ENCODE measurements at regions of chr6 and their contacts with region 1.

Region 1: GRCh38 chr6:169789982-169790927 is 38.8 kb downstream of the ERMARD start:
- DNase-seq: peak; percentile 41 to 78 (median 65)
- ATAC-seq: peak; percentile 96
- H3K4me3 ChIP-seq: peak overlapping the region; percentile 68
- H3K4me3 Mint-ChIP-seq: peak overlapping the region; percentile 81 to 91 (median 86)
- H3K27ac ChIP-seq: peak overlapping the region; percentile 12
- H3K27ac Mint-ChIP-seq: peak overlapping the region in 4 of 9 donors; percentile 15 to 29 (median 19)
- H3K4me1 ChIP-seq: peaks cover 0 to 6% of the 10 kb centered on the region in 2 donors
- H3K4me1 Mint-ChIP-seq: peaks cover 0 to 18% (median 15%) of the 10 kb centered on the region in 7 donors
- H3K27me3 ChIP-seq: no peaks in the 10 kb centered on the region
- H3K27me3 Mint-ChIP-seq: peaks cover 26 to 47% (median 38%) of the 10 kb centered on the region in 5 donors

Region 2: GRCh38 chr6:169751242-169752073 is 38.8 kb before region 1 on chr6 and contains the starts of genes DYNLT2 and ERMARD:
- CTCF ChIA-PET with region 1: no interaction called
- POLR2A ChIA-PET with region 1: no interaction called
- intact Hi-C with region 1: loop called in 1 of 2 experiments (anchors 1 kb)
- DNase-seq: peak; percentile 89 to 97 (median 94)
- ATAC-seq: peak; percentile 98
- H3K4me3 ChIP-seq: peak within 1 kb of the TSS; percentile 84
- H3K4me3 Mint-ChIP-seq: peak within 1 kb of the TSS; percentile 92 to 100 (median 98)
- H3K27ac ChIP-seq: peak within 1 kb of the TSS; percentile 92
- H3K27ac Mint-ChIP-seq: peak within 1 kb of the TSS; percentile 96 to 100 (median 100)
- H3K4me1 ChIP-seq: peaks cover 17% of the 10 kb centered on the region in 2 donors
- H3K4me1 Mint-ChIP-seq: peaks cover 21 to 43% (median 37%) of the 10 kb centered on the region in 7 donors
- H3K27me3 ChIP-seq: no peaks in the 10 kb centered on the region
- H3K27me3 Mint-ChIP-seq: peaks cover 0 to 4% (median 0%) of the 10 kb centered on the region in 5 donors
- total RNA-seq, gene DYNLT2: 2.5 to 4.7 (median 4.1) TPM
- total RNA-seq, gene ERMARD: 30.3 to 43.7 (median 35.7) TPM

Region 3: DNA sequence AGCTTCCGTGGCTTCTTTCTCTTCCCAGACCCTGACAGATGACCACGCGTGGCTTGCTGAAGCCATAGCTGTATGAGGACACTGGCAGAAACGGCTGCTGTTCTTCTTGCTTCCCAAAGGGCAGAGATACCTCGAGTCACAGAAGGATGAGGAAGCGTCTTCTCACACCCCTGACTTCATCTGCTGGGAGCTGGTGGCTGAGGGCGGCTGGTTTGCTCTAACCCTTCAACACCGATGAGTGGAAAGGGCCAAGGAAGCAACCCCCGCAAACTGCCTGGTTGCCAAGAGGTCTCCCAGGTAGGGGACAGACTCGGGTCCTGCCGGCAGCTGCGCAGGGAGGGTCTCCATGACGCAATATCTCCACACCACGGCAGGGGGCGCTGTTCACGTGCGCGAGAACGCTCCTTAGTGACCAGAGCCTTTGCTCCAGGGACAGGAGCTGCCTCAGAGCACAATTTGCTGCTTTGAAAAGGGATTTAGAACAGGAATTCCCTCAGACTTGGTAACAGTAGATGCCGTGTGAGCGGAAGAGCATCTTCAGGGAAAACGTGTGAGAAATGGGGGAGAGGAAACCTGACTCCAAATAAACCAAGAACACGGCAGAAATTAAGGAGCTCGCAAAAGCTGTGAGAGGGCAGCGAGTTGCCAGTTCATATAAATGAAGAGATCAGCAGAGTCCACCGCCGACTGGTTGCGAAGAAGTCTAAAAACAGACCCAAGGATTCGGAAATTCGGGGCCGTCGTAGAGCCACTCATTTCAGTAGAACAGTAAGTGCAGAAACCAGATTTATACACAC is 41.4 kb after region 1 on chr6:
- CTCF ChIA-PET with region 1: interaction called, 5 read pairs
- POLR2A ChIA-PET with region 1: no interaction called
- intact Hi-C with region 1: loop called in 1 of 2 experiments (anchors 1 kb)
- DNase-seq: peak; percentile 34 to 73 (median 62)
- ATAC-seq: peak; percentile 76
- H3K4me3 ChIP-seq: no peak overlapping the region
- H3K4me3 Mint-ChIP-seq: no peak overlapping the region
- H3K27ac ChIP-seq: no peak overlapping the region
- H3K27ac Mint-ChIP-seq: peak overlapping the region in 1 of 9 donors; percentile 21
- H3K4me1 ChIP-seq: no peaks in the 10 kb centered on the region
- H3K4me1 Mint-ChIP-seq: peaks cover 0 to 8% (median 4%) of the 10 kb centered on the region in 7 donors
- H3K27me3 ChIP-seq: no peaks in the 10 kb centered on the region
- H3K27me3 Mint-ChIP-seq: peaks cover 41 to 59% (median 47%) of the 10 kb centered on the region in 5 donors

Region 4: GRCh38 chr6:169959136-169960002 is 169.1 kb after region 1 on chr6:
- CTCF ChIA-PET with region 1: no interaction called
- POLR2A ChIA-PET with region 1: no interaction called
- intact Hi-C with region 1: loop called in 1 of 2 experiments (anchors 10 kb)
- DNase-seq: peak in 7 of 9 donors; percentile 28 to 83 (median 67)
- ATAC-seq: peak; percentile 83
- H3K4me3 ChIP-seq: no peak overlapping the region
- H3K4me3 Mint-ChIP-seq: peak overlapping the region in 9 of 10 donors; percentile 29 to 79 (median 67)
- H3K27ac ChIP-seq: peak overlapping the region; percentile 53
- H3K27ac Mint-ChIP-seq: peak overlapping the region in 8 of 9 donors; percentile 69 to 98 (median 87)
- H3K4me1 ChIP-seq: peaks cover 0 to 6% of the 10 kb centered on the region in 2 donors
- H3K4me1 Mint-ChIP-seq: peaks cover 0 to 31% (median 20%) of the 10 kb centered on the region in 7 donors
- H3K27me3 ChIP-seq: no peaks in the 10 kb centered on the region
- H3K27me3 Mint-ChIP-seq: peaks cover 0 to 22% (median 10%) of the 10 kb centered on the region in 5 donors

Region 5: GRCh38 chr6:170087941-170088581 is 297.8 kb after region 1 on chr6:
- CTCF ChIA-PET with region 1: no interaction called
- POLR2A ChIA-PET with region 1: no interaction called
- intact Hi-C with region 1: loop called in 1 of 2 experiments (anchors 5 kb)
- DNase-seq: peak in 8 of 9 donors; percentile 19 to 51 (median 46)
- ATAC-seq: peak; percentile 71
- H3K4me3 ChIP-seq: peak overlapping the region; percentile 68
- H3K4me3 Mint-ChIP-seq: peak overlapping the region; percentile 87 to 99 (median 92)
- H3K27ac ChIP-seq: peak overlapping the region; percentile 68
- H3K27ac Mint-ChIP-seq: peak overlapping the region; percentile 90 to 98 (median 95)
- H3K4me1 ChIP-seq: peaks cover 23 to 26% of the 10 kb centered on the region in 2 donors
- H3K4me1 Mint-ChIP-seq: peaks cover 30 to 47% (median 37%) of the 10 kb centered on the region in 7 donors
- H3K27me3 ChIP-seq: no peaks in the 10 kb centered on the region
- H3K27me3 Mint-ChIP-seq: no peaks in the 10 kb centered on the region

Region 6: GRCh38 chr6:170529839-170530469 is 739.7 kb after region 1 on chr6:
- CTCF ChIA-PET with region 1: interaction called, 4 read pairs
- POLR2A ChIA-PET with region 1: no interaction called
- intact Hi-C with region 1: loop called (anchors 1 kb)
- DNase-seq: peak; percentile 33 to 64 (median 51)
- ATAC-seq: peak; percentile 90
- H3K4me3 ChIP-seq: no peak overlapping the region
- H3K4me3 Mint-ChIP-seq: no peak overlapping the region
- H3K27ac ChIP-seq: no peak overlapping the region
- H3K27ac Mint-ChIP-seq: peak overlapping the region in 4 of 9 donors; percentile 8 to 51 (median 26)
- H3K4me1 ChIP-seq: no peaks in the 10 kb centered on the region
- H3K4me1 Mint-ChIP-seq: peaks cover 0 to 8% (median 0%) of the 10 kb centered on the region in 7 donors
- H3K27me3 ChIP-seq: no peaks in the 10 kb centered on the region
- H3K27me3 Mint-ChIP-seq: peaks cover 0 to 7% (median 0%) of the 10 kb centered on the region in 5 donors